Posterior cingulate gyrus (tissue), 11 donors: ENCODE measurements at regions of chr2 and their contacts with region 1.

Region 1: DNA sequence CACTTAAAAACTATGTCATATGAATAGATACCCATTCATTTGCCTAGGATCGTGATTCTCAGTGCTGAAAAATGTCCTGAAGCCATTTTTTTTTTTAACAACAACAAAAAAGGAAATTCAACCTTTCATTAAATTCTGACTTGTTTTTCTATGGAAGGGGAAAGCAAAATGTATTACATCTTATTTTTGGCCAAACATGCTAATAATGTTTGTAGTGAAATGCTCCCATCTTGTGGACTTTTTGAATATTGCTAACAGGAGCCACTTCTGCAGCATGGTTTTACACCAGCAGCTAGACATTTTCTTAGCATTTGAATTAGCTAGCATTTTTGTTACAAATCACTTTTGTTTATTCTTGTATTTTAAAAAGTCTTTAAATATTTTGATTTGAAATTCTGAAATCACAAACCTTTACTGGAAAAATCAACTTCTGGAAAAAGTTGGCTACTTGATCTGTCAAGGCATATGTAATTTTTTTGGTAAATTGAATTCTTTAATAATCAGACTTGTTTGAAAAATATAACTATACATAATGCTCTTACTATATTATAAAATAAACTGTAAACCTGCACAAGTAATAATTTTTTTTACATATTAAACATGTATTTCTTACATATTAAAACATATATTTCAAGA is 75.8 kb downstream of the KIDINS220 start:
- DNase-seq: no peak

Region 2: GRCh38 chr2:8693155-8693821 is 68.4 kb before region 1 on chr2:
- intact Hi-C with region 1: loop called (anchors 2 kb)
- DNase-seq: peak in 9 of 10 donors; percentile 45 to 93 (median 60)

Region 3: GRCh38 chr2:8857709-8858108 is 96.1 kb after region 1 on chr2:
- intact Hi-C with region 1: no loop called
- DNase-seq: peak in 1 of 10 donors; percentile 82